ENCODE measurements at regions of chr12 and their contacts with region 1.

Region 1: DNA sequence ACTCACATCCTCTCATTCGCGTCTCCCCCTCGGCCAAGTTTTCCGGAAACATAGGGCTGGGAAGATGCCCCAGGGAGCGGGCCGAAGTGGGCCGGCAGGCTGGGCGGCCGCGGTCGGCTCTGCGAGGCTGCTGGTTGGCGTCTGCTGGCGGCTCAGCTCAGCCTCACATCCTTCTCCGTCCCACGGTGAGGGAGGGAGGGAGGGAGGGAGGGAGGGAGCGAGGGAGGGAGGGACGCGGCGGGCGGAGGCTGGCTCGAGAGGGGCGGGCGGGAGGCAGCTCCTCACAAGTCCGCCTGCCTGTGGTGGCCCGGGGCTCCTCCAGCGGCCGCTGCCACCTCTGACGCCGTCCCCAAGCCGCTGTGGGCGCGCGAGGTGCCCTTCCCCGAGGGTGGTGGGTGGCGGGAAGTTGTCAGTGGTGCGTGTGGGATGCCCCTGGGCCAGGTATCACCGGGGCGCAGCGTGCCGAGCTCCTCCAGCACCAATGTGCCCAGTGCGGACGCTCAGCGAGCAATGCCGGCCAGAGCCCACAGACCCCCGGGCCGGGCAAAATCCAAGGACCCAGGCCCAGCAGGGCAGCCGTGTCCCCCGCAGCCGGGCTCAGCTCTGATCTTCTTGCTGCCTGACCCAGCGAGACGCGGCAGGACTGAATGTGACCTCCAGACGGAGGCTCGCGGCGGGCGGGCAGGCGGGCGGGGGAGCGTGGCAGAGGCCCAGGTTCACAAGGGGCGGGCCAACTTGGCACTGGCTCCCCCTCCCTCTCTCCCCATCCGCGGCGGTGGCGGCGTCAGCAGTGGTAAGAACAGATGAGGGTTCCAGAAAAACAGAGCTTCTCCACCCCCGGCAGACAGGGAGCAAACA is 94.0 kb downstream of the RFLNA start:
- DNase-seq: no peak
- H3K4me3 ChIP-seq: peak overlapping the region; percentile 89
- CTCF ChIP-seq: no peak

Region 2: DNA sequence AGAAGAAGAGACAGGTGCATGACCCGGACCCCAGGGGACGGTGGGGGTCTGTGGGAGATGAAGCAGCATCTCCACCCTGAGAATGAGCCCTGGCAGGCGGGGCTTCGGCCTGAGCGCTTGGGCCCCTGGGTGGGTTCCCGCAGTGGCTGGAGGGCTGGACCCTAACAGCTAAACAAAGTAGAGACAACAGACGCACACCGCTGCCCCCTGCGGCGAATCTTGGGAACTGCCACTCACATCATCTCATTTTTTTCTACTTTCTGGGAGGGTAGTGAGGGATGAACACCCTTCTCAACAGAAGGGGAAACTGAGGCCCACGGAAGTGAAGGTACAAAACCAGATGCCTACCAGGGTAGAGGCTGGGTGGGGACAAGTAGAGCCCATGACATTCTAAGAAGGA is 10.7 kb after region 1 on chr12:
- CTCF ChIA-PET with region 1: interaction called, 21 read pairs
- POLR2A ChIA-PET with region 1: no interaction called
- DNase-seq: no peak
- H3K4me3 ChIP-seq: no peak overlapping the region
- CTCF ChIP-seq: peak; percentile 71

Region 3: GRCh38 chr12:124411281-124411878 is 22.5 kb after region 1 on chr12:
- CTCF ChIA-PET with region 1: interaction called, 7 read pairs
- POLR2A ChIA-PET with region 1: interaction called, 18 read pairs
- DNase-seq: peak; percentile 63
- H3K4me3 ChIP-seq: no peak overlapping the region
- CTCF ChIP-seq: no peak

Region 4: GRCh38 chr12:124518051-124518932 is 129.4 kb after region 1 on chr12:
- CTCF ChIA-PET with region 1: no interaction called
- POLR2A ChIA-PET with region 1: interaction called, 12 read pairs
- DNase-seq: peak; percentile 99
- H3K4me3 ChIP-seq: peak overlapping the region; percentile 67
- CTCF ChIP-seq: no peak

Measured in AG04449 (cell line).